ENCODE measurements at regions of chr2 and their contacts with region 1.

Region 1: GRCh38 chr2:233053928-233054784 is 6.0 kb upstream of the INPP5D start:
- DNase-seq: peak in 1 of 2 donors; percentile 74
- H3K4me3 ChIP-seq: no peak overlapping the region
- H3K27ac ChIP-seq: no peak overlapping the region
- H3K4me1 ChIP-seq: peaks cover 0 to 3% of the 10 kb centered on the region in 2 donors
- H3K27me3 ChIP-seq: no peaks in the 10 kb centered on the region
- CTCF ChIP-seq: peak; percentile 76 to 91 (median 86)

Region 2: DNA sequence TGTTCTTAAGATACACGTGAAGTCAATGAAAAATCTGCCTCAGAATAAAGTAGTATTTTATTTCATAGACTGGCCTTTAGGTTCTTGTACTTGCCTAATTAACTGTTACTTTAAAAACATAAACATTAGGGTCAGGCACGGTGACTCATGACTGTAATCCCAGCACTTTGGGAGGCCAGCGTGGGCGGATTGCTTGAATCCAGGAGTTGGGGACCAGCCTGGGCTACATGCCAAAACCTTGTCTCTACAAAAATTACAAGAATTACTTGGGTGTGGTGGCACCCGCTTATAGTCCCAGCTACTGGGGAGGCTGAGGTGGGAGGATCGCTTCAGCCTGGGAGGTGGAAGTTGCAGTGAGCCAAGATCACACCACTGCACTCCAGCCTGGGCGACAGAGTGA is 200.1 kb before region 1 on chr2:
- intact Hi-C with region 1: loop called (anchors 5 kb)
- DNase-seq: no peak
- H3K4me3 ChIP-seq: no peak overlapping the region
- H3K27ac ChIP-seq: no peak overlapping the region
- H3K4me1 ChIP-seq: no peaks in the 10 kb centered on the region
- H3K27me3 ChIP-seq: no peaks in the 10 kb centered on the region
- CTCF ChIP-seq: no peak